HEK293 (cell line): ENCODE measurements at regions of chr6 and their contacts with region 1.

Region 1: DNA sequence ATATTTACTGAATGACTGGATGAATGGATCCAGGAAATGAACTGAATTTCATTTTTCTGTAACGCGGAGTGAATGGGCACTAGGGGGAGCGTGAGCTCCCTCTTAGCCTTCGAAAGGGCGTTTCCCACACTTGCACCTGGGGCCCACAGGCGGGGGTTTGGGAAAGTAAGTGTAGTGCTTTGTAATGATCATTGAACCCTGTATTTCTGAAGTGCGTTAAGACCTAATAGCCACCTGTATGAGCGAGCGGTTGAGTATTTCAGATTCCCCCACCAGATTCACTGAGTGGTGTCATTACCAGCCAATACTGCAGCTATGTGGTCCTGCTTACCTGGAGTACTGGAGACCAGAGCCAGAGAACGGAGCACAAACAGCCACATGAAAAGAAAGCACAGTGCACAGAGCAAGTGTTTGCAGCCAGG is 10.5 kb downstream of the SYTL3 start:
- H3K4me3 ChIP-seq: no peak overlapping the region
- H3K27ac ChIP-seq: no peak overlapping the region
- H3K4me1 ChIP-seq: no peaks in the 10 kb centered on the region
- CTCF ChIP-seq: 0 out of 2 replicates have a peak, but pooled peaks have one; percentile 45

Region 2: DNA sequence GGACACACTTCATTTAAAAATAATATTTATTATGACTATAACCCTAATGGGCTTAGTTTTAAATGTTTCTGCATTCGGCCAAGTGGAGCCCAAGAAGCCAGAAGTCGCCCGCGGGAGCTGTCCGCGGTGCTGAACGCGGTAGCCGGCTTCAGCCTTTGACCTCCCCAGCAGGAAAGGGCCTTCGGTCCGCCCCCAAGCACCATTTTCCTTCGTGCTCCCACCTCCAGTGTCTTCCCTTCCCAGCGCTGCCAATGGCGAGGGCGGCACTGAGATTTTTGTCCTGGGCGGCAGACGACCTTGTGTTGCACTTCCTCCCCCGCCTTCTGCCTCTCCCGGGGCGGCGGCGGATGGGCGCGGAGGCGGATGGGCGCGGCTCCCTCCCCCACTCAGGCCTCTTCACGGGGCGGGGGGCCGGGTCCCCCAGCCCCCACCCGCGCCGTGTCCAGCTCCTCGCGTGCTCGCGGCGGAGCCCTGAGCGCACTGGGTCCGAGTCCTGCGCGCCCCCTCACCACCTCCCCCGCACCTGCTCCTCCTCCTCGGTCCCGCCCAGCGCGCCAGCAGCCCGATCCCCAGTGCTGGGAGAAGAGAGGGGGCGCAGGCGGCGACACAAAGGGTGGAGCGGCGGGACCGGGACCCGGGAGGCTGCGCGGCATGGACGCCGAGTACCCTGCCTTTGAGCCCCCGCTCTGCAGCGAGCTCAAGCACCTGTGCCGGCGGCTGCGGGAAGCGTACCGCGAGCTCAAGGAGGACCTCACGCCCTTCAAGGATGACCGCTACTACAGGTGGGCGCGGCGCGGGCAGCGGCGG is 124.1 kb before region 1 on chr6:
- CTCF ChIA-PET with region 1: no interaction called
- POLR2A ChIA-PET with region 1: no interaction called
- H3K4me3 ChIP-seq: peak overlapping the region; percentile 66
- H3K27ac ChIP-seq: no peak overlapping the region
- H3K4me1 ChIP-seq: no peaks in the 10 kb centered on the region; the same call in 1 of the 2 replicates
- CTCF ChIP-seq: peak; percentile 58; the same call in 1 of the 2 replicates

Region 3: DNA sequence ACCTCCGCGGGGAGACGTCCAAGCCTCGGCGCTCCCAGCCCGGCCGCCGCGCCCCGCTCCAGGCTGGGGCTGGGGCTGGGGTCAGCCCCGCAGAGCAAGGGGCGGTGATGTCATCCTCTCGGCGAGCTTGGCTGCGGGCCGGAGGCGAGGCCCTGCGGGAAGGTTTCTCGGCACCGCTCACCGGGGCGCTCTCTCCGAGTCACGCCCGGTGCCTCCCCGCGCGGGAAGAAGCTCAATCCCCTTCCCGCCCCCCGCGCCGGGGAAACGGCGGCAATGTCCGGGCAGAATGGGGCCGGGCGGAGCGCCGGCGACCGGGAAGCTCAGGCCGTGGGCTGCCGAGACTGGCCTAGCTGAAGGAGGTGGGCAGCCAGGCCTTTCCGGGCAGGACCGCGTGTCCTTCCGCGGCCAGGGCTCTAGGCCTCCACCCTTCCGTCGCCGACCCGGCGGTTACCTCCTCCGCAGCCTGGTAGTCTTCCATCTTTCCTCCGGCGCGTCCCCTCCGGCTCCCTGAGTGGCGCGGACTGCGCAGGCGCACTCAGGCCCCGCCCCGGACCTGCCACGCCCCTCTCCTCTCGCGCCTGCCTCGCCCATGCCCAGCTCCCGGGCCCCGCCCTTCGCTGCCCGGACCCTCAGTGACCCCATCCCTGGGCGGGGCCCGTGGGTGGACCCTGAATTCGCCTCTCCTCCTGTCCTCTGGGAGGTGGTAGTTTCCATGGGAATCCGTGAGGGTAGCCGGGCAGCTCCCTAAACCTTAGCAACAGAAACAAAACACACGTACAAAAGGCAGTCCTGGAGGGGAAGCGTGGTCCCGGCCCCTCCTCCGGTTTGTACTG is 15.9 kb before region 1 on chr6 and contains the start of gene DYNLT1:
- CTCF ChIA-PET with region 1: interaction called, 17 read pairs
- POLR2A ChIA-PET with region 1: interaction called, 7 read pairs
- H3K4me3 ChIP-seq: peak within 1 kb of the TSS; percentile 80
- H3K27ac ChIP-seq: peak within 1 kb of the TSS; percentile 79
- H3K4me1 ChIP-seq: peaks cover 14% of the 10 kb centered on the region
- CTCF ChIP-seq: 0 out of 2 replicates have a peak, but pooled peaks have one; percentile 5

Region 4: GRCh38 chr6:158649289-158650143 is 10.8 kb before region 1 on chr6 and contains the start of gene SYTL3:
- CTCF ChIA-PET with region 1: interaction called, 17 read pairs
- POLR2A ChIA-PET with region 1: interaction called, 7 read pairs
- H3K4me3 ChIP-seq: no peak within 1 kb of the TSS
- H3K27ac ChIP-seq: no peak within 1 kb of the TSS
- H3K4me1 ChIP-seq: peaks cover 5% of the 10 kb centered on the region; the same call in 1 of the 2 replicates
- CTCF ChIP-seq: no peak

Region 5: DNA sequence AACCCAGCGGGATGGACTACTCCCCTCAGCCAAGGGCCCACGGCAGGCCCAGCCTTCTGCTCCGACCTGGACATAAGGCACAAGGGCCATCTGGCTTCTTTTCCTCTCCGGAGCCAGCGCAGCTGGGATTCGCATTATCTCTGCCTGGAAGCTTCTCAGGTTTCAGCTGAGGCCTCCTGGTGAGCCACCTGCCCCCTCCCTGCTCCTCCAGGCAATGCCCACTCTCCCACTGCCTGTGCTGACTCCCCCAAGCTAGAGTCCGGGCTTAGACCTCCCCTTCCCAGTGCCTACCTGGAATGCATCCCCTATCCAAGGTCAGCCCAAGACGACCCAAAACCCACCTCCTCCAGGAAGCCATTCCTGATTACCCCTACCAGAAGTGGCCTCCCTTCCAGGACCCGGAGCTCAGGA is 98.1 kb after region 1 on chr6:
- CTCF ChIA-PET with region 1: no interaction called
- POLR2A ChIA-PET with region 1: no interaction called
- H3K4me3 ChIP-seq: no peak overlapping the region
- H3K27ac ChIP-seq: no peak overlapping the region
- H3K4me1 ChIP-seq: peaks cover 4% of the 10 kb centered on the region; the same call in 1 of the 2 replicates
- CTCF ChIP-seq: no peak